Activated CD8-positive, alpha-beta T cell treated with anti-CD3 and anti-CD28 coated beads, Interleukin-2, amount 10 ng/mL, durations not matched to agents 7 days and 5 days (primary cell): ENCODE measurements at regions of chr9 and their contacts with region 1.

Region 1: GRCh38 chr9:34500623-34501267 is 22.0 kb downstream of the ENHO start:
- DNase-seq: peak; percentile 80
- ATAC-seq: peak; percentile 69
- H3K4me3 Mint-ChIP-seq: no peak overlapping the region
- H3K27ac Mint-ChIP-seq: no peak overlapping the region
- H3K4me1 Mint-ChIP-seq: no peaks in the 10 kb centered on the region
- H3K27me3 Mint-ChIP-seq: peaks cover 9% of the 10 kb centered on the region

Region 2: DNA sequence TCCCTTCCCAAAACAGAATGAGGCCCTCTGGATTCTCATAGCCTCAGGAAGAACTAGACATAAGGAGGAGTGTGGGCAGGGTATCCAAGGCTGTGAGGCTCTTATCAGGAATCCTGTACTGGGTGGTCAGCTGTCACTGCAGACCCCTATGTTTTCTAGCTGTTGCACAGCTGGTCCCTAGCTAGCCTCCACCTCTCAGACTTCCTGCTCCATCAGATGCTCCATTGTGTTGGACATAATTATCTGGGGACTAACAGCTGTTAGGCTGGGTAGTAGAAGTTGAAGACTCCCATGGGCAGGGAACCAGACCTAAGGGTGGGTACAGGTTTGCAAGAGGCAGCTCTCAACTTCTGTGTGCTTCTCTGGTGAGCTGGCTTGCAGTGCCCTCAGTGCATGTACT is 60.7 kb before region 1 on chr9:
- CTCF ChIA-PET with region 1: interaction called, 15 read pairs
- POLR2A ChIA-PET with region 1: no interaction called
- DNase-seq: no peak
- ATAC-seq: no peak
- H3K4me3 Mint-ChIP-seq: no peak overlapping the region
- H3K27ac Mint-ChIP-seq: no peak overlapping the region
- H3K4me1 Mint-ChIP-seq: peaks cover 7% of the 10 kb centered on the region
- H3K27me3 Mint-ChIP-seq: no peaks in the 10 kb centered on the region

Region 3: GRCh38 chr9:34522971-34523797 is 22.4 kb after region 1 on chr9 and contains the start of gene ENHO:
- CTCF ChIA-PET with region 1: no interaction called
- POLR2A ChIA-PET with region 1: no interaction called
- DNase-seq: peak; percentile 90
- ATAC-seq: peak; percentile 99
- H3K4me3 Mint-ChIP-seq: peak within 1 kb of the TSS; percentile 56
- H3K27ac Mint-ChIP-seq: no peak within 1 kb of the TSS
- H3K4me1 Mint-ChIP-seq: peaks cover 9% of the 10 kb centered on the region
- H3K27me3 Mint-ChIP-seq: peaks cover 45% of the 10 kb centered on the region
- total RNA-seq, gene ENHO: not detected